ENCODE measurements at regions of chr20 and their contacts with region 1.

Region 1: GRCh38 chr20:59165891-59166709 is 2.5 kb downstream of the ZNF831 start:
- DNase-seq: peak; percentile 49
- H3K4me3 Mint-ChIP-seq: peak overlapping the region; percentile 78
- H3K27ac Mint-ChIP-seq: peak overlapping the region; percentile 94
- H3K4me1 Mint-ChIP-seq: peaks cover 81% of the 10 kb centered on the region
- H3K27me3 Mint-ChIP-seq: no peaks in the 10 kb centered on the region

Region 2: GRCh38 chr20:58888521-58889333 is 277.4 kb before region 1 on chr20:
- CTCF ChIA-PET with region 1: no interaction called
- intact Hi-C with region 1: loop called (anchors 2 kb)
- DNase-seq: peak; percentile 89
- H3K4me3 Mint-ChIP-seq: peak overlapping the region; percentile 84
- H3K27ac Mint-ChIP-seq: no peak overlapping the region
- H3K4me1 Mint-ChIP-seq: peaks cover 27% of the 10 kb centered on the region
- H3K27me3 Mint-ChIP-seq: no peaks in the 10 kb centered on the region

Region 3: GRCh38 chr20:59102841-59103299 is 63.2 kb before region 1 on chr20:
- CTCF ChIA-PET with region 1: no interaction called
- intact Hi-C with region 1: loop called (anchors 1 kb)
- DNase-seq: no peak
- H3K4me3 Mint-ChIP-seq: no peak overlapping the region
- H3K27ac Mint-ChIP-seq: peak overlapping the region; percentile 6
- H3K4me1 Mint-ChIP-seq: peaks cover 17% of the 10 kb centered on the region
- H3K27me3 Mint-ChIP-seq: no peaks in the 10 kb centered on the region

Region 4: GRCh38 chr20:59120491-59120890 is 45.6 kb before region 1 on chr20:
- CTCF ChIA-PET with region 1: interaction called, 5 read pairs
- intact Hi-C with region 1: loop called (anchors 1 kb)
- DNase-seq: peak; percentile 59
- H3K4me3 Mint-ChIP-seq: no peak overlapping the region
- H3K27ac Mint-ChIP-seq: no peak overlapping the region
- H3K4me1 Mint-ChIP-seq: peaks cover 75% of the 10 kb centered on the region
- H3K27me3 Mint-ChIP-seq: no peaks in the 10 kb centered on the region

Region 5: DNA sequence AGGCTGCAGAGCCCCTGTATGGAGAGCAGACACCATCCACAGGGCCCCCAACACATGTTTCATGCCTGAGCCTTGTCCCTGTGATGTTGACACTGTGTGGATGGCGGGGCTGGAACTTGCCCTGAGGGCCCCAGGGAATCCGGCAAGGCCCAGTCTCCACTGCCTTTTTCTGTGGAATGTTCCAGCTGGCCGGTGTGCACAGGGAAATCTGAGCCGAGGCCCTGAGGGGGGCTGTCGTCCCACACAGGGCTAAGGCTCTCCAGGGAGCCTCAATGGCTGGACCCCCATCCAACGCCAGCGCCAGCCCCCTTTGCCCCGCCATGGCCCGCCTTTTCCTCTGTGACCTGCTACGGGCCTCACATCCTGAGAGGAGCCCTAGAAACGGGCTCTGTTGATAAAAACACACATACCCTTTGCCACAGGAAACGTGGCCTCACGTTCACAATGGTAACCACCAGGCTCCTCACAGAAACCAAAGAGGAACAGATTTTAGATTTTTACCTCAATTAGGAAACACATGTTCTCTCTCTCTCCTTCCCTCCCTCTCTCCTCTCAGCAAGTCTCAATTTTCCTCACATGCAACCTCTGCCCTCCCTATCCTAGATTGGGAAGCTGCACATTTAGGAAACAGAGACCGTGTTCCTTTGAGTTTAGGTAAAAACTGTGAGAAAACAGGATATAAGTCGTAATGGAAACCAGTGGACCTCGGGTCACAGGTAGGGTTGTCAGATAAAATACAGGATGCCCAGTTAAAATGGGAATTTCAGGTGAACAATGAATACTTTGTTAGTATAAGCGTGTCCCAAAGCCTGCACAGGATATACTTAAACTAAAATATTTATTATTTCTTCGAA is 16.2 kb before region 1 on chr20:
- CTCF ChIA-PET with region 1: interaction called, 18 read pairs
- intact Hi-C with region 1: loop called (anchors 1 kb)
- DNase-seq: peak; percentile 84
- H3K4me3 Mint-ChIP-seq: peak overlapping the region; percentile 30
- H3K27ac Mint-ChIP-seq: peak overlapping the region; percentile 82
- H3K4me1 Mint-ChIP-seq: peaks cover 88% of the 10 kb centered on the region
- H3K27me3 Mint-ChIP-seq: no peaks in the 10 kb centered on the region

Region 6: GRCh38 chr20:59177261-59178250 is 11.5 kb after region 1 on chr20:
- CTCF ChIA-PET with region 1: interaction called, 11 read pairs
- intact Hi-C with region 1: loop called (anchors 1 kb)
- DNase-seq: peak; percentile 67
- H3K4me3 Mint-ChIP-seq: peak overlapping the region; percentile 52
- H3K27ac Mint-ChIP-seq: peak overlapping the region; percentile 91
- H3K4me1 Mint-ChIP-seq: peaks cover 81% of the 10 kb centered on the region
- H3K27me3 Mint-ChIP-seq: no peaks in the 10 kb centered on the region